HepG2 (cell line): ENCODE measurements at regions of chr11 and their contacts with region 1.

Region 1: DNA sequence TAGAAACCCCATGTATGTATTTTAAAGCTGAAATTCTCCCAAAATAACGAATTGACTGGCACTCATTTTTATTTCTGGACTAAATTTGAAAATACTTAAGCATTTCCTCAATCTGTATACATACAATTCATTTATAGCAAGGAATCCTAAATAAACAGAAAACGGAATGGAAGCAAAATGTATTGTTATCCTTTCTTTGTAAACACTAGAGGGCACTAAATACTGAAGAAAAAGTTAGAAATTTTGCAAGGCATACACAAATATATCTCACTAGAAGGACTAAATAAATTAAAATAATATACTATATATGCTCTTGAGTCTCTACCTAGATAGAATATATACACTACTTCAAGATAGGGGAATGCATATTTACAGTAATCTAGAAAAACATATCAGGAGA is 23.1 kb upstream of the ANO5 start:
- DNase-seq: peak; percentile 6
- ATAC-seq: no peak
- H3K4me3 ChIP-seq: no peak overlapping the region
- H3K27ac ChIP-seq: no peak overlapping the region
- H3K4me1 ChIP-seq: no peaks in the 10 kb centered on the region
- H3K27me3 ChIP-seq: no peaks in the 10 kb centered on the region
- CTCF ChIP-seq: 0 out of 2 replicates have a peak, but pooled peaks have one; percentile 12
- EP300 ChIP-seq: no peak
- POLR2A ChIP-seq: no peak
- RAD21 ChIP-seq: no peak

Region 2: DNA sequence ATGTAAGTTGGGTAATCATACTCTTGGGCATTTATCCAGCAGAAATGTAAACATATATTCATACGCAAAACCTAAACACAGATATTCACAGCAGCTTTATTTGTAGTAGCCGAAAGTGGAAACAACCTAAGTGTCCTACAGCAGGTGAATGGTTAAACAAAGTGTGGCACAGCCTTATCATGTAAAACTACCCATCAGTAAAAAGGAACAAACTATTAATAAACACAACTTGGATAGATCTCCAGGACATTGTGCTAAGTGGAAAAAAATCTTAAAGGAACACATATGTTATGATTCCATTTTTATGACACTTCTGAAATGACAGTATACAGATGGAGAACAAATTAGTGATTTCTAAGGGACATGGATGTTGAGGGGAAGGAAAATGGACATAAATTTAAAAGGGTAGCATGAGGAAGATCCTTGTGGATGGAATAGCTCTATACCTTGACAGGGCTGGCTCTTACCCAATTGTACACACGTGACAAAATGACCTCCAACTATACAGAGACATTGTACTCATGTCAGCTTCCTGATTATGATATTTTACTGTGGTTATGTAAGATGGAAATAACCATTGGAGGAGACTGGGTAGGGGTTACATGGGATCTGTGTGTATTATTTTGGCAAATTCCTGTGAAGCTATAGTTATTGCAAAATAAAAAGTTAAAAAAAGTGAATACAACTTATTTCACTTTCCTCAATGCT is 38.5 kb after region 1 on chr11:
- CTCF ChIA-PET with region 1: no interaction called
- POLR2A ChIA-PET with region 1: no interaction called
- in situ Hi-C with region 1: no loop called
- intact Hi-C with region 1: no loop called
- DNase-seq: no peak
- ATAC-seq: no peak
- H3K4me3 ChIP-seq: no peak overlapping the region
- H3K27ac ChIP-seq: no peak overlapping the region
- H3K4me1 ChIP-seq: no peaks in the 10 kb centered on the region
- H3K27me3 ChIP-seq: no peaks in the 10 kb centered on the region
- CTCF ChIP-seq: no peak
- EP300 ChIP-seq: no peak
- POLR2A ChIP-seq: no peak
- RAD21 ChIP-seq: no peak

Region 3: DNA sequence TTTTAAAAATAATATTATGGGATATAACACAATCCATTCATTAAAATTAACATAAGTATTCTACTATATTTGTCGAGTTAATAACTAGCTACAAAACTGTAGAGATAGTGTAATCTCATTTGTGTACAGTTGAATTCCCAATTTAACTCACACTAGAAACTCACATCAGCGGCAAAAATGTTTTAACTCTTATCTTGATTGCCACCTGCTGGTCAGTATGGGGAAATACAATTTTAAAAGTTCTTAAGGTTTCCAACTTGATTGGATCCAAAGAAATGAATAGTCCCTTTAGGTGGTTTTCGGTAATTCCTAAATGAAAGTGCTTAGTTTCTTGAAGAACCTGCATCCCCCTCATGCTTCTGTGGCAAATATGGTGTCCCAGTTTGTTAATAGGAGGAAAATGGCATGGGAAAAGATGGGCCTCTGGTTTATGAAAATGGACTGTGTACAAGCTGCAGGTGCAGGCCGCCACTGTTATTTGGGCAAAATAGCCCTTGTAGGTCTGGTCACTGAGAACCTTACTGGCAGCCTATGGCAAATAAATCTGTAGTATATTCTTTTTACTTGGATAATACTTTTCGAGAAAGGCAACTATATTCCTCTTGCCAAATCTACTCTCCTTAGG is 134.6 kb after region 1 on chr11:
- CTCF ChIA-PET with region 1: interaction called, 8 read pairs
- POLR2A ChIA-PET with region 1: no interaction called
- in situ Hi-C with region 1: loop called (anchors 10 kb)
- intact Hi-C with region 1: no loop called
- DNase-seq: peak; percentile 12
- ATAC-seq: 0 out of 3 replicates have a peak, but pooled peaks have one; percentile 33
- H3K4me3 ChIP-seq: no peak overlapping the region
- H3K27ac ChIP-seq: no peak overlapping the region
- H3K4me1 ChIP-seq: no peaks in the 10 kb centered on the region
- H3K27me3 ChIP-seq: no peaks in the 10 kb centered on the region
- CTCF ChIP-seq: peak; percentile 59
- EP300 ChIP-seq: no peak
- POLR2A ChIP-seq: no peak
- RAD21 ChIP-seq: no peak